ENCODE measurements at regions of chr9 and their contacts with region 1.

Region 1: DNA sequence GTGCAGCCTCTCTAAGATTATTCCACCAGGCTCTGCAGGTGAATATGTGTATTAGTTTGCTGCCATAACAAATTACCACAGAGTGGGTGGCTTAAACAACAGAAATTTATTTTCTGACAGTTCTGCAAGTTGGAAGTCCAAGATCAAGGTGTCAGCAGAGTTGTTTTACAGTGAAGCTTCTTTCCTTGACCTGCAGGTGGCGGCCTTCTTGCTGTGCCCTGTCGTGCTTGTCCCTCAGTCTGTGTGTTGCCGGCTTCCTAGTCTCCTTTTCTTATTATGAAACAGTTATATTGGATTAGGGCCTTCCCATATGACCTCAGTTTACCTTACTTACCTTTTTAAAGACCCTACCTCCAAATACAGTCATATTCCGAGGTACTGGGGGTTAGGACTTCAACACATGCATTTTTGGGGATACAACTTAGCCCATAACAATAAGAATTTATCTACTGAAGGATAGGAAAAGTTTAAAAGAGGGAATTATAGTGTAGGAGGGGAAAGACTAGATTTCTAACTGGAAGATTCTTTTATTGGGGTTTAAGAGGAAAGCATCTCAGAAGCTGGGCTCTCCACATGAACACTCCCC is 97.4 kb downstream of the OSTF1 start:
- DNase-seq: no peak
- H3K4me3 ChIP-seq: peak overlapping the region in 1 of 2 experiments; percentile 33; a peak in 1 of 4 replicates
- H3K27ac ChIP-seq: no peak overlapping the region
- H3K4me1 ChIP-seq: no peaks in the 10 kb centered on the region
- H3K27me3 ChIP-seq: peaks cover 13% of the 10 kb centered on the region; the same call in 1 of the 2 replicates
- CTCF ChIP-seq: peak; percentile 61
- EP300 ChIP-seq: no peak
- RAD21 ChIP-seq: no peak

Region 2: GRCh38 chr9:74595286-74595685 is 590.4 kb before region 1 on chr9:
- CTCF ChIA-PET with region 1: no interaction called
- POLR2A ChIA-PET with region 1: no interaction called
- DNase-seq: no peak
- H3K4me3 ChIP-seq: no peak overlapping the region
- H3K27ac ChIP-seq: no peak overlapping the region
- H3K4me1 ChIP-seq: no peaks in the 10 kb centered on the region; a peak in 1 of 4 replicates
- H3K27me3 ChIP-seq: no peaks in the 10 kb centered on the region
- CTCF ChIP-seq: no peak
- EP300 ChIP-seq: no peak
- RAD21 ChIP-seq: no peak

Region 3: DNA sequence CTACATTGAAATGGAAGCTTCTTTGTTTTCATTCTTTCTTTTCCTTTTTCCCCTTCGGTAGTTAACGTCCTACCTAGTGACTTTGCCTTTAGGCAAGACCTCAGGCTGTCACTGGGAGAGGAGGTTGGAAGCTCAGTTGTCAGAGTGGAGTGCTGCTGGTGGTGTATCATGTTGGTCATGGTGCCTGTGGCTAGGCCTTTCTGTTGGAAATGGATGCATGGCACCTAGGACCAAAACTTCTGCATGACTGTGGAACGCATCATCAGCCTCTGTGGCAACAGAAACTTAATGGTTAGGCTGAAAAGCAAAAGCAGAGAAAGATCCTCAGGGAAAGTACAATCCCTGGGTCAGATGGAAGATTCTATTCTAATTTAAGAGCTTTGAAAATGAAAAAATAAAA is 39.4 kb before region 1 on chr9:
- CTCF ChIA-PET with region 1: no interaction called
- POLR2A ChIA-PET with region 1: no interaction called
- DNase-seq: no peak
- H3K4me3 ChIP-seq: no peak overlapping the region
- H3K27ac ChIP-seq: peak overlapping the region in 1 of 2 experiments; percentile 85; a peak in 2 of 4 replicates
- H3K4me1 ChIP-seq: peaks cover 0 to 4% of the 10 kb centered on the region in 2 experiments; a peak in 2 of 4 replicates
- H3K27me3 ChIP-seq: no peaks in the 10 kb centered on the region
- CTCF ChIP-seq: no peak
- EP300 ChIP-seq: no peak
- RAD21 ChIP-seq: no peak

Region 4: GRCh38 chr9:75175395-75175794 is 10.3 kb before region 1 on chr9:
- CTCF ChIA-PET with region 1: interaction called, 20 read pairs
- POLR2A ChIA-PET with region 1: no interaction called
- DNase-seq: no peak
- H3K4me3 ChIP-seq: no peak overlapping the region
- H3K27ac ChIP-seq: no peak overlapping the region
- H3K4me1 ChIP-seq: no peaks in the 10 kb centered on the region
- H3K27me3 ChIP-seq: no peaks in the 10 kb centered on the region; the same call in 1 of the 2 replicates
- CTCF ChIP-seq: no peak
- EP300 ChIP-seq: no peak
- RAD21 ChIP-seq: no peak

Region 5: DNA sequence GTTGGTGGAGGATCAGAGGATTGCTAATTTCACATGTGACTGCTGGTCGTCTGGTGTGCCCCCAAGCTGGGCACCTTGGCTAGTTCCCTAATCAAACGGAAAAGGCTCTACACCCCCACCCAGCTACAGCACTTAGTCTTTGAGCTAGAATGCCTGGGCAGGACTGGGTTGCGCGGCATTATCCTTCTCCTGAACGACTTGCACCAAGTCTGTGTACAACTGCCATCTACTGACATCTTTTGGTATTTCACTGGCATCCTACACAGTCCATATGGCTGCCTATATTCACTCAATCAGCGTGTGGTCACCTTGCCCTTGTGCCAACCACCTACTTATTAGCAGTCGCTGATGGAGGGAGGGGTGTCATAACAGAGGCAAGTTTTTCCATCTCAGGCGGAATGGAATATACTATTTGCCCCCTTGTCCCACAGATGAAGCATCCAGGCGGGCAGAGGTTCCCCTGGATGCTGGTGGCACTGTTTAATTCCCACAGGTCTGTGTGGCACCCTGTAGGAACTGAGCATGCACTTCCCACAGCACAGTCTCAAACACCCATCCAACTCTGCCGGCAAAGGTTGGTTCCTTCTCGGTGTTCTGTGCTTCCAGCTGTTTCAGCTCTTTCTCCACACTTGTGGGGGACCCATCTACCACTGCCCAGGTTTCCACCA is 52.8 kb after region 1 on chr9:
- CTCF ChIA-PET with region 1: interaction called, 14 read pairs
- POLR2A ChIA-PET with region 1: no interaction called
- DNase-seq: peak; percentile 32
- H3K4me3 ChIP-seq: no peak overlapping the region
- H3K27ac ChIP-seq: no peak overlapping the region
- H3K4me1 ChIP-seq: no peaks in the 10 kb centered on the region
- H3K27me3 ChIP-seq: no peaks in the 10 kb centered on the region
- CTCF ChIP-seq: peak; percentile 58
- EP300 ChIP-seq: no peak
- RAD21 ChIP-seq: peak; percentile 59

Measured in SK-N-SH (cell line).